Mammary epithelial cell (primary cell): ENCODE measurements at regions of chr14 and their contacts with region 1.

Region 1: DNA sequence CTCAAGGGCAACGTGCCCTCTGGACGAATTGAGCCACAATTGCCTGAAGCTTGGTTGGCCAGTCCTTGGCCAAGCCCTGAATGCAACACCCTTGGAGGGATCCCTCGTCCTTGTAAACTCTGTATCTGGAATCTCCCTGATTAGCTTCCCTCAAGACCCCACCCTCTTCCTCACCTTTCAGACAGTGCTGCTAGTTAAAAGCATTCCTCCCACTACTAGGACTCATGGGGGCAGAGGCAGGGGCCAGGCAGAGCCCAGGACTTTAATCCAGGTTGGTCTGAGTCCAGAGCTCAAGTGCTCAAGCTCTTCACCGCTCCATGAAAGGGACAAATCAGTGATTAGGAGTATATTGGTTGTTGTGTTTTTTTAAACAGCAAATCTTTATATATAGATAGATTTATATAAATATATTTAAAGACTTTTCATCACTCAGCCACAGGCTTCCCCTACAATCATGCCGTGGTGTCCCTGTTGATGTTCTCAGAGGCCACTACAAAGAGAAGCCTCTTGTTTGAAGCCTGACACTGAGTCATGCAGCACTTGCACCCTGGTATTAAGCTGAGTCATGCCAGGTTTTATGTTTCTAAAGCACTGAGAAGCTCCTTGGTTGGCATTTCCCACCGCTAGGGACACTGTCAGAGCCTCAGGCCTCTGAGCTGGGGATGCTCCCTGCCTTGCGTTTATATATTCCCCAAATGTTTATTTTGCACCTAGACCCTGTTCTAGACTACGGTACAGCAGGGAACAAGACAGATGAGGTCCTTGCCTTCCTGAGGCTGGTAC is 53.8 kb upstream of the GSC start:
- DNase-seq: peak; percentile 50
- H3K4me3 ChIP-seq: no peak overlapping the region
- H3K27ac ChIP-seq: no peak overlapping the region
- H3K4me1 ChIP-seq: no peaks in the 10 kb centered on the region
- H3K27me3 ChIP-seq: no peaks in the 10 kb centered on the region
- CTCF ChIP-seq: no peak

Region 2: DNA sequence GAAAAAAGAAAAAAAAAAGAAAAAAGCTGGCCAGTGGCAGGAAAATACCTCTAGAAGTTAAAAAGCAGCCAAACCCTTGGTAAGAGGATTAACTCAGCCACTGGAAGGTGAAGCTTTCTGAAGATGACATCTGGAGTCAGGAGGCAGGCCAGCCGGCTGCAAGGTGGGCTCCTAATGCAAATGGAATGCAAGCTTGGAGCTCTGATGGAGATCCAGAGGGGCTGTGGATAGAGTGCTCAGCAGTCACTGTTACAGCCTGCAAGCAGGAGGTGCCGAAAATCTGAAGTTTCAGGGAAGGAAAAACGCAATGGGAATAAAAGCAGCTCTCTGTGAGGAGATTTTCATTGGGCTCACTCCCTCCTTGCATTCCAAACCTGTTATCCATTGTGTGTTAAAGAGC is 94.8 kb before region 1 on chr14:
- CTCF ChIA-PET with region 1: no interaction called
- dilution Hi-C with region 1: loop called (anchors 5 kb)
- in situ Hi-C with region 1: no loop called
- intact Hi-C with region 1: no loop called
- DNase-seq: no peak
- H3K4me3 ChIP-seq: no peak overlapping the region
- H3K27ac ChIP-seq: no peak overlapping the region
- H3K4me1 ChIP-seq: no peaks in the 10 kb centered on the region
- H3K27me3 ChIP-seq: no peaks in the 10 kb centered on the region
- CTCF ChIP-seq: no peak

Region 3: GRCh38 chr14:94769391-94770250 is 54.1 kb before region 1 on chr14 and contains the start of gene GSC:
- CTCF ChIA-PET with region 1: no interaction called
- dilution Hi-C with region 1: loop called (anchors 10 kb)
- in situ Hi-C with region 1: no loop called
- intact Hi-C with region 1: no loop called
- DNase-seq: peak; percentile 37
- H3K4me3 ChIP-seq: peak within 1 kb of the TSS; percentile 39 to 42 (median 42)
- H3K27ac ChIP-seq: no peak within 1 kb of the TSS
- H3K4me1 ChIP-seq: peaks cover 13% of the 10 kb centered on the region
- H3K27me3 ChIP-seq: peaks cover 73% of the 10 kb centered on the region
- CTCF ChIP-seq: no peak
- total RNA-seq, gene GSC: 0.17 TPM in 1 of 2 donors, not detected in the other

Region 4: DNA sequence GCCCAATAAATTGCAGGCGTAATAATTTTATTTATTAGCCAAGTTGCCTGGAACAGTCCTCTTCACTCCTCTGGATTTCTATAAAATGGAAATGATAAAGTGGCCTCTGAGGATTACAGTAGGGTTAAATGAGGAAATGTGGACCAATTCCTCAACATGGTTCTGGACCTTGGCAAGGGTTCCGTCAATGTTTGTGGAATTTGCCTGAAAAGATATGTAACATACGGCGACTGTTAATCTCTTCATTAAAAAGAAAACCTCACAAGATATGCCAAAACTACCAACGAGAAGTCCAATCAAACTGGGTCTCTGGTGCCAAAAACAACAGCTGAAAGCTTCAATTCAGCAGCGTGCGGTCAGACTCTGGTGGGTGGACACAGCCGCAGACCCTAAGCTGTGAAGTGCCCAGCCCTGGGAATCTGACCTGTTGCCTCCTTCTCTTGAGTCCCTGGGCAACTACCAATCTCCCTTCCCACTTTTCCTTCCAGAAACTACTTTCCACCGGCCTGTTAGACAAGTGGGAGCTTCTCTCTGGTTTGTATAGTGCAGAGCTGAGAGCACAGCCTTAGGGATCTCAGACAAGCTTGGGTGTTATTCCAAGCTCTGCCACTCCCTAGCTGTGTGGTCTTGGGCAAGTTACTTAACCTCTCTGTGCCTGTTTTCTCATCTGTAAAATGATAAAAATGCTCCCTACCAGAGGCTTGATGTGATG is 136.7 kb after region 1 on chr14:
- CTCF ChIA-PET with region 1: no interaction called
- dilution Hi-C with region 1: no loop called
- in situ Hi-C with region 1: no loop called
- intact Hi-C with region 1: no loop called
- DNase-seq: no peak
- H3K4me3 ChIP-seq: no peak overlapping the region
- H3K27ac ChIP-seq: no peak overlapping the region
- H3K4me1 ChIP-seq: no peaks in the 10 kb centered on the region
- H3K27me3 ChIP-seq: peaks cover 2% of the 10 kb centered on the region
- CTCF ChIP-seq: no peak